AG04450 (cell line): ENCODE measurements at regions of chr1 and their contacts with region 1.

Region 1: DNA sequence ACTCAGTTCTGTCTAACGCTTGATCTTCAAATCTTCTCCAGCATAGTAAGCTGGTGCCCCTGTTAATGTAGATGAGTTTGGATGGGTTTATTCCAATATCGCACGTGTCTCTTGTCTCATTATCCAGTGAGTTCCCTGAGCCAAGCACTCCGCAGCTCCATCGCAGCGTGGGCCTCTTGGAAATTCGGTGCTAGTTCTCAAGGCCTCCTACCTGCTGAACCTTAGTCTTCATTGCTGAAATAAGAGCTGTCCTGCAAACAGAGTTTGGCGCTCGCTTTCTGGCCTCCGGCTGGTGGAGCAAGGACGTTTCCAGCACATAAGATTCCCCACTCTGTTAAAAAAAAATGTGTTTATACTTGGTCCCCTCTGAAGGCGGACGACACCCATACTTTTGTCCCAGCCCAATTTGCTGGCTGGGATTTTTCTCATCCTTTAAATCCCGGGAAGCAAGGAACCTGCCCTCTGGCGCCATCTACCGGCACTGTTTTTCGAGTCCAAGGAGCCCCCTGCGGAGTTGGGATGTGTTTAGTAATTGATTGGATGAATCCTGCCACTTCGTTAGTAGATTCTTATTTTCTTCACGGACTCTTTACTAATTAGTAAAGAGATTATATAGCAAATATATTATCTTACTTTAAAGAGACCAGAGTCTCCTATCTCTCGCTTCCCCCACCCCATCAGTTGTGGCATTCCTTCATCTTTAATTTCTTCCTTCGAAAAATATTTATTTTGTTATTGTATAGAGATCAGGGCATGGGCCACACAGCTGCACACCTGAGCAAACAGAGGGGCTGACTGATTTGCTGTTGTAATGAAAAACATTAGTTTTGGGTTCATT is 14.7 kb downstream of the JUN start:
- DNase-seq: no peak
- H3K4me3 ChIP-seq: no peak overlapping the region
- H3K27ac ChIP-seq: peak overlapping the region; percentile 3
- H3K27me3 ChIP-seq: no peaks in the 10 kb centered on the region
- CTCF ChIP-seq: peak; percentile 86

Region 2: DNA sequence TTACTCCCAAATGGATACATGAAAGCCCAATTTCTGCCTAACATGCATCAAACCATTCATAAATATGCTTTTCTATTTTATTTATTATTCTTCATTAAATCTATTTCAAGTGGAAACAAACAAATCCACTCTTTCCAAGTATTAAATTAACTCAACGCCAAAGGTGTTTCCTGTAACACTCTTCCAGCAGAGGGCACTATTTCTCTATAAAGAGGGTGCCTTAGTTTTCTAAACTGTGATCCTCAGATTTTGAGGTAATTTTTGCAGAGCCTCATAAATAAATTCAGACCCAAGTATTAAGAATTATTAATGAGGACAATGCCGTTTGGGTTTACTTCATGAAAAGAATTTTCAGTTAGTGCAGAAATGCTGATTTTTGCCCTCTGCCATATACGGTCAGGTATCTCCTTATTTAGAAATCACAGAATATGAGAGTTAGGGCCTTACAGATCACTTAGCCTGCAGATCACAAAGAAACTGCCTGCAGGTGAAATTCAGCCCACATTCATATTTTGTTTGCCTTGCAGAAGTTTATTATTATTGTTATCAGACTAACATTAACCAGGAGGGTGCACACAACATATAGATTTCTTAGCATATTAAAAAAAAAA is 29.2 kb before region 1 on chr1:
- CTCF ChIA-PET with region 1: interaction called, 54 read pairs
- POLR2A ChIA-PET with region 1: no interaction called
- DNase-seq: no peak
- H3K4me3 ChIP-seq: no peak overlapping the region
- H3K27ac ChIP-seq: no peak overlapping the region
- H3K27me3 ChIP-seq: no peaks in the 10 kb centered on the region
- CTCF ChIP-seq: peak; percentile 78

Region 3: GRCh38 chr1:58755468-58755872 is 13.7 kb before region 1 on chr1:
- CTCF ChIA-PET with region 1: interaction called, 11 read pairs
- POLR2A ChIA-PET with region 1: interaction called, 9 read pairs
- DNase-seq: peak; percentile 99
- H3K4me3 ChIP-seq: peak overlapping the region; percentile 8; the same call in 1 of the 2 replicates
- H3K27ac ChIP-seq: peak overlapping the region; percentile 91
- H3K27me3 ChIP-seq: no peaks in the 10 kb centered on the region
- CTCF ChIP-seq: no peak

Region 4: DNA sequence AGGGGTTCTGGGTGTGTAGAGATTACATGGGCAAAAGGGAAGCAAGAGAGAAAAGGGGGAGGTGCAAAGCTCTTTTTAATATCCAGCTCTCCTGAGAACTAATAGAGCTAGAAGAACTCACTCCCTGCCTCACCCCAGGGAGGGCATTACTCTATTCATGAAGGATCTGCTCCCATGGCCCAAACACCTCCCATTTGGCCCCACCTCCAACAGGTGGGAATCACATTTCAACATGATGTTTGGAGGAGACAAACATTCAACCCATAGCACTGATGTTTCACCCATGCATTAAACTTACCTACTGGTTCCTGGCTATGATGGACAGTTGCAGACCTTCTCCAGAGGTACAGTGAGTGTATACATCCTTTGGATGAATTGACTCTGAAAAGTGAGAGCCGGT is 21.9 kb after region 1 on chr1:
- CTCF ChIA-PET with region 1: no interaction called
- POLR2A ChIA-PET with region 1: no interaction called
- DNase-seq: no peak
- H3K4me3 ChIP-seq: no peak overlapping the region
- H3K27ac ChIP-seq: no peak overlapping the region
- H3K27me3 ChIP-seq: no peaks in the 10 kb centered on the region
- CTCF ChIP-seq: no peak